ENCODE measurements at regions of chr17 and their contacts with region 1.

Region 1: GRCh38 chr17:38598536-38598935 is 7.2 kb downstream of the SRCIN1 start:
- DNase-seq: peak in 1 of 2 donors; percentile 52
- H3K4me3 ChIP-seq: no peak overlapping the region
- H3K27ac ChIP-seq: no peak overlapping the region
- H3K4me1 ChIP-seq: peaks cover 0 to 9% of the 10 kb centered on the region in 2 donors
- H3K27me3 ChIP-seq: peaks cover 0 to 3% of the 10 kb centered on the region in 2 donors
- CTCF ChIP-seq: no peak
- POLR2A ChIP-seq: no peak

Region 2: GRCh38 chr17:38572669-38573365 is 25.7 kb before region 1 on chr17:
- intact Hi-C with region 1: loop called (anchors 1 kb)
- DNase-seq: no peak
- H3K4me3 ChIP-seq: peak overlapping the region in 2 of 3 donors; percentile 49 to 68
- H3K27ac ChIP-seq: no peak overlapping the region
- H3K4me1 ChIP-seq: peaks cover 0 to 5% of the 10 kb centered on the region in 2 donors
- H3K27me3 ChIP-seq: peaks cover 0 to 9% of the 10 kb centered on the region in 2 donors
- CTCF ChIP-seq: no peak
- POLR2A ChIP-seq: no peak

Region 3: GRCh38 chr17:38636054-38636453 is 37.5 kb after region 1 on chr17:
- intact Hi-C with region 1: loop called (anchors 2 kb)
- DNase-seq: no peak
- H3K4me3 ChIP-seq: no peak overlapping the region
- H3K27ac ChIP-seq: no peak overlapping the region
- H3K4me1 ChIP-seq: no peaks in the 10 kb centered on the region
- H3K27me3 ChIP-seq: no peaks in the 10 kb centered on the region
- CTCF ChIP-seq: no peak
- POLR2A ChIP-seq: no peak